CD8-positive, alpha-beta T cell (primary cell): ENCODE measurements at regions of chr16 and their contacts with region 1.

Region 1: DNA sequence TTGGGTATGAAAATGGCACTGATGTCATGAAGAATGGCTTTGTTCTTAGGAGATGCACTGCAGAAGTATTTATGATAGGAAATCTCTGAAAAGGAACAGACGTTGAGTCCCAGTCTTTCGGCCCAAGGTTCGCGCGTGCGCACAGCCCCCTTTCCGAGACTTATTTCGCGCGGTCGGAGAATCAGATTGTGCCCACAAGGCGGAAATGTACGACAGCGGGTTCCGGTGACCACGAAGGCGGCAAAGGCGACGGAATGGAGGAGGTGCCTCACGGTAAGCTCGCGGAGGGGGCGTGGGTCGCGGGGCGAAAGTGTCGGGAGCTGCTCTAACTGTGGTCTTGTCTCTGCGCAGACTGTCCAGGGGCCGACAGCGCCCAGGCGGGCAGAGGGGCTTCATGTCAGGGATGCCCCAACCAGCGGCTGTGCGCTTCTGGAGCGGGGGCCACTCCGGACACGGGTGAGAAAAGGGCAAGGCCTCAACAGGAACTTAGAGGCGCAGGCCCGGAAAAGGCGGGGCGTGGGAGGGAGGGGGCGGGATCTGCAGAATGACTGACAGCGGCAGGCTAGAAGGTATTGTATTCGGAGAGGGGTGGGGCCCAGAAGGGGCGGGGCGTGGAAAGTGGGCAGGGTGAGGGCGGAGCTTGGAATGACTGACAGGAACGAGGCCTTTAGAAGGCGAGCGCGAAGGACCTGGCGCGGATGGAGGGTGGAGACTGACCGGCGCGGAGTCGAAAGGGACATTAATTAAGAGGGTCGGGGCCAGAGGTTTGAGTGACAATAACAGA is at the start of gene NUBP1:
- DNase-seq: peak; percentile 98 to 100 (median 99)
- ATAC-seq: peak; percentile 95
- H3K4me3 ChIP-seq: peak within 1 kb of the TSS; percentile 84 to 91
- H3K4me3 Mint-ChIP-seq: peak within 1 kb of the TSS; percentile 97
- H3K27ac ChIP-seq: peak within 1 kb of the TSS; percentile 85 to 99
- H3K27ac Mint-ChIP-seq: peak within 1 kb of the TSS; percentile 99
- H3K4me1 ChIP-seq: peaks cover 19% of the 10 kb centered on the region
- H3K4me1 Mint-ChIP-seq: peaks cover 38% of the 10 kb centered on the region
- H3K27me3 ChIP-seq: no peaks in the 10 kb centered on the region
- H3K27me3 Mint-ChIP-seq: no peaks in the 10 kb centered on the region
- CTCF ChIP-seq: no peak
- total RNA-seq, gene NUBP1: 22.8 to 25.1 TPM

Region 2: DNA sequence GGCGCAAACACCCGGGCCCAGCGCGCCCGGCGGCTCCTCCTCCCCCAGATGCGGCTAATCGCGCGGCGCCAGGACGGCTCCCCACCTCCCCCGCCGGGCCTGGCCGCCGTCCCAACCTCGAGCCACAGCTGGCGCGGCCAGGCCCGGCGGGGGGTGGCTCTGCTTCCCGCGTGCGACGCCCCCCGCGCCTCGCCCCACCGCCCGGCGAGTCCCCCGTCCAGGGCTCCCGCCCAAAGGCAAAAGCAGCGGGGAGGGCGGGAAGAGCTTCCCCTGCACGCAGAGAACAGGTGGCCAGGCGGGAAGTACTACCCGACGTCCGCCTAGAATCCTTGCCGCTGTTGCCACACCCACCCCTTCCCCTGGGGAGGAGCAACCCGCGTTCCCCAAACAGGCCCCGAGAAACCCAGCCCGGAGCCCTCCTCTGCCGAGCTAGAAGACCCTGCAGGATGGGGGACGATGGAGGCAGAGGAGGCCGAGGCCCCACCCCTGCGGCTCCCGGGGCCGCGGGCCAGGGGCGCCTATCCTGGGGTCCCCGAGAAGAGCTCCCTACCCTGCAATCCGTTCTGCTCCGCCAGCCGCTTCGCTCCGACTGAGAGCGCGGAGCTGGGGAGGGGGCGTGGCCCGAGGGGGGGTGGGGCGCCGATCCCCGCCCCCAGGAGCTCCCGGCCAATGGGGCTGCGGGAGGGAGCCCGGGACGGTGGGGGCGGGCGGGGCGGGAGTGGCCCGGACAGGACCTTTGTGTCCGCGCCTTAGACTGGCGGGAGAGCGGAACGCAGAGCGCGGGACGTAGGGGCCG is 1875.2 kb before region 1 on chr16 and contains the start of gene CARHSP1:
- CTCF ChIA-PET with region 1: no interaction called
- POLR2A ChIA-PET with region 1: no interaction called
- intact Hi-C with region 1: loop called in 1 of 2 experiments (anchors 5 kb)
- DNase-seq: peak; percentile 55 to 90 (median 75)
- ATAC-seq: peak; percentile 76
- H3K4me3 ChIP-seq: peak within 1 kb of the TSS; percentile 68 to 72
- H3K4me3 Mint-ChIP-seq: peak within 1 kb of the TSS; percentile 97
- H3K27ac ChIP-seq: peak within 1 kb of the TSS; percentile 41 to 52
- H3K27ac Mint-ChIP-seq: peak within 1 kb of the TSS; percentile 93
- H3K4me1 ChIP-seq: peaks cover 53% of the 10 kb centered on the region
- H3K4me1 Mint-ChIP-seq: peaks cover 57% of the 10 kb centered on the region
- H3K27me3 ChIP-seq: no peaks in the 10 kb centered on the region
- H3K27me3 Mint-ChIP-seq: no peaks in the 10 kb centered on the region
- CTCF ChIP-seq: no peak
- total RNA-seq, gene CARHSP1: 28.0 to 33.3 TPM

Region 3: GRCh38 chr16:9090960-9091866 is 1652.6 kb before region 1 on chr16 and contains the start of gene HAPSTR1:
- CTCF ChIA-PET with region 1: no interaction called
- POLR2A ChIA-PET with region 1: no interaction called
- intact Hi-C with region 1: loop called in 1 of 2 experiments (anchors 5 kb)
- DNase-seq: peak; percentile 98 to 100 (median 99)
- ATAC-seq: peak; percentile 85
- H3K4me3 ChIP-seq: peak within 1 kb of the TSS; percentile 85 to 93
- H3K4me3 Mint-ChIP-seq: peak within 1 kb of the TSS; percentile 99
- H3K27ac ChIP-seq: peak within 1 kb of the TSS; percentile 82 to 92
- H3K27ac Mint-ChIP-seq: peak within 1 kb of the TSS; percentile 99
- H3K4me1 ChIP-seq: peaks cover 37% of the 10 kb centered on the region
- H3K4me1 Mint-ChIP-seq: peaks cover 34% of the 10 kb centered on the region
- H3K27me3 ChIP-seq: no peaks in the 10 kb centered on the region
- H3K27me3 Mint-ChIP-seq: no peaks in the 10 kb centered on the region
- CTCF ChIP-seq: no peak
- total RNA-seq, gene HAPSTR1: 189 to 191 TPM

Region 4: DNA sequence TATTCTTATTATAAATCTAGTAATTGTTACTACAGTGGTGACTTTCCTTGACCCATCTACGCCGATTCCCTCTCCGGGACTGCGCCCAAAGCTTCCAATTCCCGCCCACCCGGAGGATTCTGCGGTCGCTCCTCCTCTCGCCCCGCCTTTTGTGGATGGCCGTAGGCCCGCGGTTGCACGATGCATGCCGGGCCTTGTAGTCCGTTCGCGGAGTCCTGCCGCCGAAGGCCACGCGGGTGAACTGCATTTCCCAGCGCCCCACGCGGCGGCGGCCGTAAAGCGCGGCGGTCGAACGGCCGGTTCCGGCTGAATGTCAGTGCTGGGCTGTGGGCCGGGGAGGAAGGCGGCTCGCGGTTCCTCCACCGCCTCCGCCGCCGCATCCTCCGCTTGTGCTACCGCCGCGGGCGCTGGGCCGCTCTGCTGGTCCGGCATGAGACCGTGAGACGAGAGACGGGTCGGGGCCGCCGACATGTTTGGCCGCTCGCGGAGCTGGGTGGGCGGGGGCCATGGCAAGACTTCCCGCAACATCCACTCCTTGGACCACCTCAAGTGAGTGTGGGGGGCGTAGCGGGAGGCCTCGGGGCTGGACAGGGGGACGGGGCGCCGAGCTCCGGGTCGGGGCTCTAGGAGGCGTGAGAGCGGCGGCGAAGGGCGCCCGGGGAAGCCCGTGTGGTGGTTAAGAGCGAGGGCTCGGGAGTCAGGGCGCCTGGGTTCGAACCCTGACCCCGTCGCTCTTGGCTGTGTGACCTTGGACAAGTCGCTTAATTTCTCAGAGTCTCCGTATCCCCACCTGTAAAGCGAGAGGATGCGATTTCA is 200.7 kb after region 1 on chr16 and contains the start of gene CLEC16A:
- CTCF ChIA-PET with region 1: no interaction called
- POLR2A ChIA-PET with region 1: interaction called, 3 read pairs
- intact Hi-C with region 1: loop called (anchors 1 kb)
- DNase-seq: peak; percentile 91 to 98 (median 93)
- ATAC-seq: peak; percentile 70
- H3K4me3 ChIP-seq: peak within 1 kb of the TSS; percentile 66 to 76
- H3K4me3 Mint-ChIP-seq: peak within 1 kb of the TSS; percentile 93
- H3K27ac ChIP-seq: peak within 1 kb of the TSS; percentile 38 to 65
- H3K27ac Mint-ChIP-seq: peak within 1 kb of the TSS; percentile 82
- H3K4me1 ChIP-seq: peaks cover 60% of the 10 kb centered on the region
- H3K4me1 Mint-ChIP-seq: peaks cover 71% of the 10 kb centered on the region
- H3K27me3 ChIP-seq: no peaks in the 10 kb centered on the region
- H3K27me3 Mint-ChIP-seq: no peaks in the 10 kb centered on the region
- CTCF ChIP-seq: no peak
- total RNA-seq, gene CLEC16A: 20.5 to 21.9 TPM

Region 5: GRCh38 chr16:11851294-11852091 is 1107.7 kb after region 1 on chr16 and contains the start of gene RSL1D1:
- CTCF ChIA-PET with region 1: no interaction called
- POLR2A ChIA-PET with region 1: no interaction called
- intact Hi-C with region 1: loop called (anchors 5 kb)
- DNase-seq: peak; percentile 89 to 98 (median 93)
- ATAC-seq: peak; percentile 79
- H3K4me3 ChIP-seq: peak within 1 kb of the TSS; percentile 99
- H3K4me3 Mint-ChIP-seq: peak within 1 kb of the TSS; percentile 93
- H3K27ac ChIP-seq: peak within 1 kb of the TSS; percentile 92 to 95
- H3K27ac Mint-ChIP-seq: peak within 1 kb of the TSS; percentile 96
- H3K4me1 ChIP-seq: peaks cover 48% of the 10 kb centered on the region
- H3K4me1 Mint-ChIP-seq: peaks cover 57% of the 10 kb centered on the region
- H3K27me3 ChIP-seq: no peaks in the 10 kb centered on the region
- H3K27me3 Mint-ChIP-seq: no peaks in the 10 kb centered on the region
- CTCF ChIP-seq: no peak
- total RNA-seq, gene RSL1D1: 235 to 242 TPM

Region 6: DNA sequence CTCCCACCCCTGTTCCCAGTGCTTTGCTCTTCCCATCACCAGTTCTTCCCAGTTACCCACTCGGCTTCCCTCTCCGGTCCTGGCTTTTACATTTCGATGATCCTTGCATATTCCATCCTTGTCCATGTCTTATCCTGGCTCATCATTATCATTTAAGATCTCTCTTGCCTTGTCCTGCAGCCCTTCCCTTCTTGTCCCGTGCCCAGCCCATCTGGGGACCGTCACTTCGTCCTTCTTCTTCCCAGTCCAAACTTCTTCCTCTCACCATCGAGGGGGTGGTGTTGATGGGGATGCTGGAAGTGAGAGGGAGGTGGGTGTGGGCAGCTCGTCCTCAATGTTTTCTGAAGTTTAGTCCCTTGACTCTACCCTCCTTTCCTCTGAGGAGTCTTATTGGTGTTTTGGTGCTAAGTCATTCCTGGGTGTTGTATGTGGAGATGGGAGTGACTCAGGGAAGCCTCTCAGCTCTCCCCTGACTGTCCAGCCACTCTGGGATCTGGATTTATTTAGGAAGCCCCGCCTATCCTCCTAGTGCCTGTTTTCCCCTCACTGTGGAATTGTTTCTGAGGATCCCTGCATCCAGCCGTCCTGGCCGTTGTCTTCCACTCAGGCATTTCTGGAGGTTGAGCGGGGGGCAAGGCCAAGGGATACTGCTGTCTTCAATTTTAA is 1233.7 kb after region 1 on chr16:
- CTCF ChIA-PET with region 1: no interaction called
- POLR2A ChIA-PET with region 1: no interaction called
- intact Hi-C with region 1: loop called in 1 of 2 experiments (anchors 10 kb)
- DNase-seq: no peak
- ATAC-seq: no peak
- H3K4me3 ChIP-seq: peak overlapping the region; percentile 65 to 81
- H3K4me3 Mint-ChIP-seq: peak overlapping the region; percentile 91
- H3K27ac ChIP-seq: no peak overlapping the region
- H3K27ac Mint-ChIP-seq: peak overlapping the region; percentile 89
- H3K4me1 ChIP-seq: peaks cover 16% of the 10 kb centered on the region
- H3K4me1 Mint-ChIP-seq: peaks cover 42% of the 10 kb centered on the region
- H3K27me3 ChIP-seq: no peaks in the 10 kb centered on the region
- H3K27me3 Mint-ChIP-seq: no peaks in the 10 kb centered on the region
- CTCF ChIP-seq: no peak